ENCODE measurements at regions of chr7 and their contacts with region 1.

Region 1: DNA sequence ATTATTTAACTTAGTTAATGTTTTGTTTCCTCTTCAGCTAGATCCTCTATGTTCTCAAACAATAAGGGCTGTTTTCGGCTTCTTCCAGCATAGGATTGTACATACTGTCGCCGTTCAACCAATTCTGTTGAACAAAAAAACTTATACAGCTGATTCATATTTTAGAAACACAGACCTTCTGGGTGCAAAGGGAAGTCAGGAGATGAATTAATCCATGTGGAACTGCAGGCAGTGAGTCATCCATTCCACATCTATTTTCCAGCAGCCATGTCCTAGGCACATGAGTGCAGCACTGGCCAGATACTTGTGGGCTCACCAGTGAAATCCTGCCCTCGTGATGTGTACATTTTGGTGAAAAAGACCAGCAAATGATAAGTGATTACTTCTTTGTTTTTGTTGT is 163.2 kb downstream of the JAZF1 start:
- DNase-seq: no peak
- H3K4me3 ChIP-seq: no peak overlapping the region
- H3K27ac ChIP-seq: no peak overlapping the region
- H3K4me1 ChIP-seq: peaks cover 0 to 10% (median 0%) of the 10 kb centered on the region in 3 donors
- H3K27me3 ChIP-seq: no peaks in the 10 kb centered on the region
- CTCF ChIP-seq: no peak
- POLR2A ChIP-seq: no peak

Region 2: GRCh38 chr7:27196287-27196767 is 821.0 kb before region 1 on chr7:
- intact Hi-C with region 1: loop called (anchors 10 kb)
- DNase-seq: no peak
- H3K4me3 ChIP-seq: no peak overlapping the region
- H3K27ac ChIP-seq: no peak overlapping the region
- H3K4me1 ChIP-seq: peaks cover 30 to 58% (median 44%) of the 10 kb centered on the region in 3 donors
- H3K27me3 ChIP-seq: peaks cover 41 to 100% (median 70%) of the 10 kb centered on the region in 4 donors
- CTCF ChIP-seq: peak; percentile 51 to 80 (median 70)
- POLR2A ChIP-seq: no peak

Measured in esophagus squamous epithelium (tissue), 5 donors.